Heart left ventricle (tissue), 16 donors: ENCODE measurements at regions of chr9 and their contacts with region 1.

Region 1: DNA sequence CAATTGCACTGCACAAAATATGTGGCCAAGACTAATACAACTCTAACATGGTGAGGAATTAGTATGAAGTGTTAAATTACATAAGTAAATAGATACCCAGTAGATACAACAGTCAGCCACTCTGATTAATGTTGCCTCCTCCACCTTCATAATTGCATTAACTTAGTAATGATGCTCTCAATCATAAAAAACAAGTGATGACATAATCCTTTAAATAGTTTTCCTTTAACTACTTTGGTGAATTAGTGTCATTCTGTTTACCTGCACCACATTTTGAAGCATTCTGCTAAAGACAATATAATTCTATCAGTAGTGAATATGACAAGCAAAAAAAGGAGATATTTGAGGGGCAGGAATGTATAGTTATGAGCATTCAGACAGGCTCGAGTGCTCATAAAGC is 265.9 kb upstream of the SLC24A2 start:
- DNase-seq: no peak
- ATAC-seq: no peak
- H3K4me3 ChIP-seq: no peak overlapping the region
- H3K27ac ChIP-seq: no peak overlapping the region
- H3K4me1 ChIP-seq: no peaks in the 10 kb centered on the region
- H3K27me3 ChIP-seq: no peaks in the 10 kb centered on the region
- CTCF ChIP-seq: no peak
- POLR2A ChIP-seq: no peak

Region 2: DNA sequence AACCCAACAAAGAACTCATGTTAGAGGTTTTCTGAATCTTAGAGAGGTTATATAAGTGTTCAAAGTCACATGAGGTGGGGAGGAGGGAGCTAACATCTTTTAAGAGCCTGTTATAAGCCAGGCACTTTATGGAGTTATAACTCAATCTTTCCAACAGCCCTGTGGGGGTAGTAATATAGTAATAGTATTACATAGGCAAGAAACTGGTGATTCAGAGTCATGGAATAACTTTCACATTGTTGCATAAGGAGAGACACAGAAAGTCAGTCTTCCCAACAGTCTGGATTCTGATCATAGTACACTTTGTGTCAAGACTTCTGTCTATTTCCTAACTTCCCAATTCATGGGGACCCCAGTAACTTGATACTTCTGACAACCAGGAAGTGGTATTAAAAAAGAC is 556.7 kb before region 1 on chr9:
- intact Hi-C with region 1: no loop called
- DNase-seq: no peak
- ATAC-seq: peak in 1 of 4 donors; percentile 26
- H3K4me3 ChIP-seq: no peak overlapping the region
- H3K27ac ChIP-seq: no peak overlapping the region
- H3K4me1 ChIP-seq: peaks cover 0 to 7% (median 2%) of the 10 kb centered on the region in 12 donors
- H3K27me3 ChIP-seq: no peaks in the 10 kb centered on the region
- CTCF ChIP-seq: no peak
- POLR2A ChIP-seq: no peak

Region 3: DNA sequence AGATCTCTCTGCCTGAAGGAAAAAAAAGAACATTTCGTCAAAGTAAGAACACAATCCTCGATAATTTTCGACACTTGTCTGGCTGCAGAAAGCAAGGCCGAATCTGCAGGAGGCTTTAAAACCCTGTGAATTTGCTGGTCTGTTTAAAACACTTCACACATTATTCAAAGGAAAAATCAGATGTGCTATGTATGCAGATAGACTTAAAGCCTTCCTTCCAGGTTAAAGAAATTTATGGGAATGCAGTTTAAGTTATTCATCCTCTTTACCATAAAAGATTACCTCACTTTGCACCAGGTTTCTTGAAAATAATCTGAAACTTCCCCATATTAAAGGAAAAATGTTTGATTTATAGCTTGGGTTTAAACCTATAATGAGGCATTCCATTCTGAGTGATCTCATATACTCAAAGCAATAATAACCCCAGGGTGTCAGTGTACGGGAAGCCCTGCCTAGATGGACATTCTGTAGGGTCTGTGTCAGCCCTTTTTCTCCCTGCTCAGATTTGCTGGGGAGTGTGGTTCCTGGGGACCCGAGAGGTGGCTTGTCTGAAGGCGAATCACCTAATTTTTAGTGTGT is 57.6 kb after region 1 on chr9:
- intact Hi-C with region 1: loop called in 1 of 10 experiments (anchors 10 kb)
- DNase-seq: no peak
- ATAC-seq: no peak
- H3K4me3 ChIP-seq: no peak overlapping the region
- H3K27ac ChIP-seq: no peak overlapping the region
- H3K4me1 ChIP-seq: no peaks in the 10 kb centered on the region
- H3K27me3 ChIP-seq: no peaks in the 10 kb centered on the region
- CTCF ChIP-seq: no peak
- POLR2A ChIP-seq: no peak

Region 4: GRCh38 chr9:20152151-20152725 is 97.5 kb after region 1 on chr9:
- intact Hi-C with region 1: no loop called
- DNase-seq: no peak
- ATAC-seq: no peak
- H3K4me3 ChIP-seq: no peak overlapping the region
- H3K27ac ChIP-seq: no peak overlapping the region
- H3K4me1 ChIP-seq: no peaks in the 10 kb centered on the region
- H3K27me3 ChIP-seq: no peaks in the 10 kb centered on the region
- CTCF ChIP-seq: no peak
- POLR2A ChIP-seq: no peak